ENCODE measurements at regions of chr9 and their contacts with region 1.

Region 1: DNA sequence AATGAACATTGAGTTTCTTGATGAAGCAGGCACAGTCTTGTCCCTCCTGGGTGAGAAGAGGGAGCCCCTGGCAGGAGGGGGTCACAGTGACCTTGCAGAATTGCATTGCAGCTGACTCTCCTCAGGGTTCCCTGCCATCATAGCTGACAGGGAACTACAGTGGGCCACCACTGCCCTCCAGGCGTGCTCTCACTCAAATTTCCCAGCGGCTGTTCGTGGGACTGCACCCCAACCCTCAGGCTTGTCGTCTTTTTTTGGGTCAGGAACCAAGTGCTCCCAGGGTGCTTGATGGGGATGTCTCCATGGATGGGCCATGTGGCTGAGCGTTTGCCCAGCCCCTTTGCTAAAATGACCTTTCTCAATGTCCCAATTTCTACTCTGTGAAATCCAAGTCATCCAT is 215.8 kb downstream of the MELK start:
- DNase-seq: no peak
- ATAC-seq: peak; percentile 88
- H3K4me3 ChIP-seq: no peak overlapping the region
- H3K27ac ChIP-seq: no peak overlapping the region
- H3K4me1 ChIP-seq: no peaks in the 10 kb centered on the region
- H3K27me3 ChIP-seq: no peaks in the 10 kb centered on the region; a peak in 1 of 5 replicates
- CTCF ChIP-seq: peak; percentile 9; the same call in 1 of the 2 replicates
- EP300 ChIP-seq: no peak
- POLR2A ChIP-seq: no peak
- RAD21 ChIP-seq: no peak

Region 2: DNA sequence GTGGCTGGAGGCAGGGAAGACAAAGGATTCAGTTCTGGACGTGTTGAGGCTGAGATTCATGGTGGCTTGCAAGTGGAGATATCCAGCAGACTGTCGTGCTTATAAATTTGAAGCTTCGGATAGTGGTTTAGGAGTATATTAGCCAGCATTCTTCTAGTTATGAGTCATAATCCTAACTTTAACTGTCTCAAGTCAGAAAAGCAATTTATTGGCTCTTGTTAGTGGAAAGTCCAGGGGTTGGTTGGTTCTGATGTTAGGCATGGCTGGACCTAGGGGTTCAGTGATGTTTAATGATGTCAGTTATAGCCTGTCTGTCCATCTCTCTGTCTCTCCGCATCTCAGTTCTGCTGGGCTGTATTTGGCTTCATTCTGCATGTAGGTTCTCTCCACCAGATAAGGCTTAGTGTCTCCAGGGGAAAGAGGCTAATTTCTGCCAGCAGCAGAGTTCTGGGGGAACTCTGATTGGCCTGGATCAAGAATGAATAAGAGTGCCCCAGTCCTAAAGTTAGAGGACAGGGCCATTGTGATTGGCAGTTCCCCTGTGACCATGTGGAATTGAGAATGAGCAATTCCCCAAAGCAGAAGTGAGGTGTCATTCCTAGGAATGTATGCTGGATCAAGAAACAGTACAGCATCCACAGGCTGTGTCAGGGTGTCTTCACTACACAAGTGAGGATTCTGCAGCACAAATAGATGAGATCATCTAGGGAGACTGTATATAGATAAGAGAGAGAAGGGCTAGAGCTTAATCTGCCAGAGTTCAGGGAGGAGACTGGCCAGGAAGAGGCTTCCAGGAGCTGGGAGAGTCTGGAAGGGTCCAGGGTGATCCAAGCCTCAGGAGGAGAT is 1353.4 kb after region 1 on chr9:
- CTCF ChIA-PET with region 1: no interaction called
- POLR2A ChIA-PET with region 1: no interaction called
- in situ Hi-C with region 1: no loop called
- intact Hi-C with region 1: loop called (anchors 5 kb)
- DNase-seq: no peak
- ATAC-seq: no peak
- H3K4me3 ChIP-seq: no peak overlapping the region
- H3K27ac ChIP-seq: no peak overlapping the region
- H3K4me1 ChIP-seq: no peaks in the 10 kb centered on the region
- H3K27me3 ChIP-seq: peaks cover 1 to 49% of the 10 kb centered on the region in 2 experiments; a peak in 3 of 5 replicates
- CTCF ChIP-seq: no peak
- EP300 ChIP-seq: no peak
- POLR2A ChIP-seq: no peak
- RAD21 ChIP-seq: no peak

Measured in HepG2 (cell line).